ENCODE measurements at regions of chr17 and their contacts with region 1.

Region 1: GRCh38 chr17:17942846-17943245 is 29.4 kb downstream of the TOM1L2 start:
- DNase-seq: no peak
- ATAC-seq: no peak; the same call in 2 of the 3 replicates
- H3K4me3 ChIP-seq: no peak overlapping the region
- H3K27ac ChIP-seq: no peak overlapping the region
- H3K4me1 ChIP-seq: peaks cover 10 to 13% of the 10 kb centered on the region in 2 experiments; a peak in 4 of 5 replicates
- H3K27me3 ChIP-seq: no peaks in the 10 kb centered on the region
- CTCF ChIP-seq: no peak
- EP300 ChIP-seq: no peak
- POLR2A ChIP-seq: no peak
- RAD21 ChIP-seq: no peak

Region 2: DNA sequence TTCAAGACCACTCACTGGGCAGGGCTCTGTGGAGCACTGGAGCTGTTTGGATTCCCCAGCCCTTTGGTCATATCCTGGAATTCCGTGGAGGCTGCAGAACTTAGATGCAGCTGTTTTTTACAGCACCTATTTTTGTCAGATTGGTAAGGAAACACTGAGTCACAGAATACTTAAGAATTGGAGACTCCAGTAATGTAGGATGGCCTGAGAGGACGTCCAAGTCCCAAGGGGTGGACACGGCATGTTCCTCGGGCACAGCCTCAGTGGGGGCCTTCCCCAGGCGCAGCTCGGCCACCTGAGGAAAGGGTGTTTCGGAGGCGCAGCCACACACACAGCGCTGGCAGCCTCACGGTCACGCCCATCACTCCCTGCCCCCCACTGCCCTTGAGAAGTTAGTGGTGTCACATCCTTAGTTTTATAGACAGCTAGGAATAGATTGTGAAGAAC is 751.5 kb before region 1 on chr17:
- CTCF ChIA-PET with region 1: no interaction called
- POLR2A ChIA-PET with region 1: no interaction called
- in situ Hi-C with region 1: no loop called
- intact Hi-C with region 1: no loop called
- DNase-seq: no peak
- ATAC-seq: no peak
- H3K4me3 ChIP-seq: no peak overlapping the region
- H3K27ac ChIP-seq: no peak overlapping the region
- H3K4me1 ChIP-seq: peaks cover 0 to 3% of the 10 kb centered on the region in 2 experiments; a peak in 2 of 5 replicates
- H3K27me3 ChIP-seq: no peaks in the 10 kb centered on the region
- CTCF ChIP-seq: no peak
- EP300 ChIP-seq: no peak
- POLR2A ChIP-seq: no peak
- RAD21 ChIP-seq: no peak

Region 3: GRCh38 chr17:17931159-17931558 is 11.7 kb before region 1 on chr17:
- CTCF ChIA-PET with region 1: no interaction called
- POLR2A ChIA-PET with region 1: interaction called, 10 read pairs
- in situ Hi-C with region 1: no loop called
- intact Hi-C with region 1: no loop called
- DNase-seq: no peak
- ATAC-seq: no peak
- H3K4me3 ChIP-seq: no peak overlapping the region
- H3K27ac ChIP-seq: no peak overlapping the region
- H3K4me1 ChIP-seq: peaks cover 0 to 9% of the 10 kb centered on the region in 2 experiments; a peak in 3 of 5 replicates
- H3K27me3 ChIP-seq: no peaks in the 10 kb centered on the region
- CTCF ChIP-seq: no peak
- EP300 ChIP-seq: no peak
- POLR2A ChIP-seq: no peak
- RAD21 ChIP-seq: no peak